CD8-positive, alpha-beta T cell (primary cell): ENCODE measurements at regions of chr13 and their contacts with region 1.

Region 1: GRCh38 chr13:108176685-108177274 is 38.6 kb downstream of the LIG4 start:
- DNase-seq: peak in 8 of 9 experiments; percentile 11 to 66 (median 56)
- ATAC-seq: peak; percentile 57
- H3K4me3 ChIP-seq: no peak overlapping the region
- H3K4me3 Mint-ChIP-seq: no peak overlapping the region
- H3K27ac ChIP-seq: no peak overlapping the region
- H3K27ac Mint-ChIP-seq: no peak overlapping the region
- H3K4me1 ChIP-seq: no peaks in the 10 kb centered on the region
- H3K4me1 Mint-ChIP-seq: no peaks in the 10 kb centered on the region
- H3K27me3 ChIP-seq: no peaks in the 10 kb centered on the region
- H3K27me3 Mint-ChIP-seq: peaks cover 6% of the 10 kb centered on the region
- CTCF ChIP-seq: peak; percentile 69

Region 2: DNA sequence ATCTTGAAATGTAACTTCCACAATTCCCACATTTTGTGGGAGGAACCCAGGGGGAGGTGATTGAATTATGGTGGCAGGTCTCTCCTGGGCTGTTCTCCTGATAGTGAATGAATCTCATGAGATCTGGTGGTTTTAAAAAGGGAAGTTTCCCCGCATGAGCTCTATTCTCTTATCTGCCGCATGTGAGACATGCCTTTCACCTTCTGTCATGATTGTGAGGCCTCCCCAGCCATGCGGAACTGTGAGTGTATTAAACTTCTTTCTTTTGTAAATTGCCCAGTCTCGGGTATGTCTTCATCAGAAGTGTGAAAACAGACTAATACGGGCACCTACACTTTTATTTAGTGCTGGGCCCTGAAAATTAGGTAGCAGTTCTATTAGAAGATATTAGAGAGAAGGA is 138.5 kb after region 1 on chr13:
- CTCF ChIA-PET with region 1: no interaction called
- POLR2A ChIA-PET with region 1: no interaction called
- intact Hi-C with region 1: no loop called
- DNase-seq: no peak
- ATAC-seq: no peak
- H3K4me3 ChIP-seq: no peak overlapping the region
- H3K4me3 Mint-ChIP-seq: no peak overlapping the region
- H3K27ac ChIP-seq: no peak overlapping the region
- H3K27ac Mint-ChIP-seq: no peak overlapping the region
- H3K4me1 ChIP-seq: no peaks in the 10 kb centered on the region
- H3K4me1 Mint-ChIP-seq: no peaks in the 10 kb centered on the region
- H3K27me3 ChIP-seq: no peaks in the 10 kb centered on the region
- H3K27me3 Mint-ChIP-seq: no peaks in the 10 kb centered on the region
- CTCF ChIP-seq: no peak

Region 3: GRCh38 chr13:108895220-108895704 is 718.5 kb after region 1 on chr13:
- CTCF ChIA-PET with region 1: no interaction called
- POLR2A ChIA-PET with region 1: no interaction called
- intact Hi-C with region 1: loop called (anchors 2 kb)
- DNase-seq: peak in 2 of 9 experiments; percentile 11 to 20
- ATAC-seq: no peak
- H3K4me3 ChIP-seq: no peak overlapping the region
- H3K4me3 Mint-ChIP-seq: no peak overlapping the region
- H3K27ac ChIP-seq: no peak overlapping the region
- H3K27ac Mint-ChIP-seq: no peak overlapping the region
- H3K4me1 ChIP-seq: no peaks in the 10 kb centered on the region
- H3K4me1 Mint-ChIP-seq: peaks cover 7% of the 10 kb centered on the region
- H3K27me3 ChIP-seq: no peaks in the 10 kb centered on the region
- H3K27me3 Mint-ChIP-seq: no peaks in the 10 kb centered on the region
- CTCF ChIP-seq: peak; percentile 52

Region 4: GRCh38 chr13:108974686-108975085 is 797.9 kb after region 1 on chr13:
- CTCF ChIA-PET with region 1: no interaction called
- POLR2A ChIA-PET with region 1: no interaction called
- intact Hi-C with region 1: no loop called
- DNase-seq: no peak
- ATAC-seq: no peak
- H3K4me3 ChIP-seq: no peak overlapping the region
- H3K4me3 Mint-ChIP-seq: no peak overlapping the region
- H3K27ac ChIP-seq: no peak overlapping the region
- H3K27ac Mint-ChIP-seq: no peak overlapping the region
- H3K4me1 ChIP-seq: no peaks in the 10 kb centered on the region
- H3K4me1 Mint-ChIP-seq: no peaks in the 10 kb centered on the region
- H3K27me3 ChIP-seq: no peaks in the 10 kb centered on the region
- H3K27me3 Mint-ChIP-seq: peaks cover 15% of the 10 kb centered on the region
- CTCF ChIP-seq: no peak